RWPE1 (cell line): ENCODE measurements at regions of chr1 and their contacts with region 1.

Region 1: DNA sequence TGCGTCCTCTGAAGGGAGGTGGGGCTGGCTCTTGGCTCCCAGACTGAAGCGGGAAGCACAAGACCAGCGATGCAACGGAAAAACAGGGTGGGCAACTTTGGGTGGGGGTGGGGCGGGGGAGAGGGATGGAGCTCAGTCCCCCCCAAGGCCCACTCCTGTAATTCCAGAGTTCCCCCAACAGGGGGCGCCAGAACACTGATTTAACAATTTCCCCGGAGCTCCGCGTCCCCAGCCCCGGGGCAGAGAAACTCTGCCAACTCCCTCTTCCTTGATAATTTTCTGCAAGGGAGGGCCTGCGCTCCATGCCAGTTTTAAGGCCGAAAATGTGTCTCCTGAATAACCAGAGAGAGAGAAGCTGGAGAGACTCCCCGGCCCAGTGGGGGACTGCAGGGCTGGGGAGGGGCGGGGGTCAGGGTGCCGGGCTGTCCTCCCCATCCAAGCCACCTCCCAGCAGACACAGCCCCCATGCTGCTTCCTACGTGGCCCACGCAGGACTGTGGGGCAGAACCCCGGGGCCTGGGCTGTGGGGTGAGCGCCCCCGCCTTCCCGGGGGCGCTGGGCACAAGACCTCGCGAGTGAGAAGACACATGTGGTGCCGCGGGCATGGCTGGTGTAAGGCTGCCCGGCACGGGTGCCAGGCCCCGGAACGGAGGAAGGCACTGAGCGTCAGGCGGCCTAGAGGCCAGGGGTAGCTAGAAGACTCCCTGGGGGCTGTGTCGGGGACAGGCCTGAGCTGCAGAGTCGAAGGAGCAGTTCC is 51.4 kb downstream of the KIF21B start:
- DNase-seq: peak; percentile 85
- H3K27ac ChIP-seq: 0 out of 2 replicates have a peak overlapping the region, but pooled peaks have one; percentile 15
- CTCF ChIP-seq: peak; percentile 79

Region 2: DNA sequence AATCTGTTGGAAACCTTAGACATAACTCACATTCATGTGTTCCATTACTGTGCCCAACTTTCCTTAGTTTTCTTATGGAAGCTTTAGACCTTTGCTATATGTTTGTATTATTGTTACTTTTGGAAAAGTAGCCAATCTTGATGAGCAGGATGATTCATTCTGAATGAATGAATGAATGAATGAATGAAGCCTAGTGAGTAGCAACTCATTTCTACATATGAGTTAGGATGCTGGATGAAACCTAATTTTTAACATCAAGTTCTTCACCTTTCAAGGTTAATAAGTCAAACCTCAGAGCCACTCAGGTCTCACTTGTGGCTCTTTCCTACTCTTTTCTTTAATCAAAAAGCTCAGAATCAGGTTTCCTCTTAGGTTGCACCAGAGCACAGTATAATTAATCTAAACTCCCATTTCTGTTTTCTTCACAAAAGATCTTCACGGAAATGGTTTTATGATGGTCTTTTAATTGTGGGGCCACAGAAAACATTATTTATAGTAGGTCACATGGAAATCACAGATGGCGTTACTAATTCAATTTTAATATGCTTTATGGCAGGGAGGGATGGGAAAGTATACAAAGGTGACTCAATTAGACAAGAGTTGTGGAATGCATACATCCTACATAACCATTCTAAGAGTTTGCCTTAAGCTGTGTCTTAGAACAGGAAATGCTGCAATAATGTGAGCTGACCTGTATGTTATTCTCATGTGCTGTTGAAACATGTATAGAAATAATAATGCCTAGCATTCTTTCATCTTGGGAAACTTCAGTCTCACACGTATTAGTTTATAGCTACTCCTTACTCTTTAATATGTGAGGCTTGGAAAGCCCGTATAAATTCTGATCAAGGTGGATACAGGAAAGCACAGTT is 297.9 kb before region 1 on chr1:
- CTCF ChIA-PET with region 1: no interaction called
- POLR2A ChIA-PET with region 1: no interaction called
- DNase-seq: peak; percentile 91
- H3K27ac ChIP-seq: no peak overlapping the region
- CTCF ChIP-seq: no peak

Region 3: GRCh38 chr1:200959411-200959921 is 12.7 kb before region 1 on chr1:
- CTCF ChIA-PET with region 1: interaction called, 22 read pairs
- POLR2A ChIA-PET with region 1: no interaction called
- DNase-seq: no peak
- H3K27ac ChIP-seq: no peak overlapping the region
- CTCF ChIP-seq: no peak

Region 4: DNA sequence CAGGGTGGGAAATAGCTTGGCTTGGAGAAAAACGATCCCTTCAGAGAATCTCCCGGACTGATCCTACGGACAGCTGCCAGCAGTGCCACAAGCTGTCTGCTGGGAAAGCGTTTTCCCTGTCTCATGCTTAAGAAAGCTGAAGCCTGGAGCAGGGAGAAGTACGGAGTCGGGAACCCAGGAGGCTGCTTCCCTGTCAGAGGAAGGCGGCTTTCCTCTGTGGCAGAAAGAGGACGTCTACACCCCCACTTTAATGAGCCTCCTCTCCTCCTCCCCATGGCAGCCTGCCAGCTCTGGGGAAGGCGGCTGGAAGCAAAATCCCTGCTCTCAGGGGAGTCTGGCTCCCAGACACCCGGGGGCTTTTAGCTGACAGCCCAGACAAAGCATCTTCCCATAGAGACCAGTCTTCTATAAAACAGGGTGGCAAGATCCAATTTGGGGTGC is 44.1 kb after region 1 on chr1:
- CTCF ChIA-PET with region 1: interaction called, 24 read pairs
- POLR2A ChIA-PET with region 1: no interaction called
- DNase-seq: no peak
- H3K27ac ChIP-seq: no peak overlapping the region
- CTCF ChIP-seq: no peak

Region 5: GRCh38 chr1:201042779-201043461 is 70.8 kb after region 1 on chr1:
- CTCF ChIA-PET with region 1: interaction called, 39 read pairs
- POLR2A ChIA-PET with region 1: no interaction called
- DNase-seq: peak; percentile 80
- H3K27ac ChIP-seq: no peak overlapping the region
- CTCF ChIP-seq: peak; percentile 69

Region 6: GRCh38 chr1:201080135-201080534 is 108.0 kb after region 1 on chr1:
- CTCF ChIA-PET with region 1: interaction called, 11 read pairs
- POLR2A ChIA-PET with region 1: no interaction called
- DNase-seq: no peak
- H3K27ac ChIP-seq: no peak overlapping the region
- CTCF ChIP-seq: no peak

Region 7: GRCh38 chr1:201119206-201120197 is 147.4 kb after region 1 on chr1:
- CTCF ChIA-PET with region 1: interaction called, 47 read pairs
- POLR2A ChIA-PET with region 1: no interaction called
- DNase-seq: peak; percentile 45
- H3K27ac ChIP-seq: no peak overlapping the region
- CTCF ChIP-seq: peak; percentile 44